HepG2 (cell line): ENCODE measurements at regions of chr4 and their contacts with region 1.

Region 1: GRCh38 chr4:48578132-48578968 is 88.3 kb downstream of the ZAR1 start:
- DNase-seq: peak; percentile 64
- ATAC-seq: peak; percentile 91
- H3K4me3 ChIP-seq: no peak overlapping the region
- H3K27ac ChIP-seq: no peak overlapping the region
- H3K4me1 ChIP-seq: no peaks in the 10 kb centered on the region
- H3K27me3 ChIP-seq: no peaks in the 10 kb centered on the region
- CTCF ChIP-seq: peak; percentile 85
- EP300 ChIP-seq: no peak
- POLR2A ChIP-seq: no peak
- RAD21 ChIP-seq: peak; percentile 61

Region 2: DNA sequence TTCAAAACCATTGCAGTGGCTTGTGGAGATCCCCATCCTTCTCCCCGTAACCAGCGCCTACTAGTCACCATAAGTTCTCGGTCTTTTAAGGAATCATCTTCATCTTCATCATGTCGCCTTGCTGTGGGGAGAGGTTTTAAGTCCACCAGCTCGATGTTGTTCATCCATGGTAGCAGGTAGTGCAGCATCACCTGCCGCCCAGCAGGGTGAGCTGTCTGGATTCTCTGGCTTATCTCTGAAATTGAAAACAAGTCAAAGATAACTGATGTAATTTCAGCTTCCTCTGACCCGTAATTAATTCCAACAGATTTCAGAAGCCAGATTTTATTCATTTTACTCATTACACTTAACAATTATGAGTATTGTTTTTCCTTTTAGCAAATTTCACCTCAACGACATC is 20.9 kb before region 1 on chr4:
- CTCF ChIA-PET with region 1: no interaction called
- POLR2A ChIA-PET with region 1: no interaction called
- in situ Hi-C with region 1: no loop called
- intact Hi-C with region 1: no loop called
- DNase-seq: no peak
- ATAC-seq: peak; percentile 73
- H3K4me3 ChIP-seq: no peak overlapping the region
- H3K27ac ChIP-seq: no peak overlapping the region
- H3K4me1 ChIP-seq: no peaks in the 10 kb centered on the region
- H3K27me3 ChIP-seq: no peaks in the 10 kb centered on the region
- CTCF ChIP-seq: peak; percentile 27
- EP300 ChIP-seq: no peak
- POLR2A ChIP-seq: no peak
- RAD21 ChIP-seq: no peak

Region 3: DNA sequence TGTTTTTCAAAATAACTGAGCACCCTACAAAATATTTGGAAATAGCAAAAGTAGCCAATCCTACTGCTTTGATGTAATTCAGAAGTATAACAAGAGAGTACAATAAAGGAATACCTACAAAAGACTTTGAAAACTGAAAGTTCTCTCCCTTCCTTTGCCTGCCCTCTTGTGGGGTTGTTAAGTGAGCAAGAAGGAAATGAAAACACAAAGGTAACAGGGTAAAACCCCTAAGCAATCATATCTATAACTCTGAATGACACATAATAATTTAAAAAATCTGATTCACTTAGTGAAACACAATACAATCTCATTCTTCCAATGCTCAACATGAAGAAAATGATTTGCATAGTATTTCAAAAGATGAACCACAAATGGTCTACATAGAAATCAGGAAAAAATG is 103.5 kb after region 1 on chr4:
- CTCF ChIA-PET with region 1: interaction called, 6 read pairs
- POLR2A ChIA-PET with region 1: no interaction called
- in situ Hi-C with region 1: no loop called
- intact Hi-C with region 1: loop called (anchors 1 kb)
- DNase-seq: peak; percentile 5
- ATAC-seq: no peak
- H3K4me3 ChIP-seq: no peak overlapping the region
- H3K27ac ChIP-seq: no peak overlapping the region
- H3K4me1 ChIP-seq: no peaks in the 10 kb centered on the region
- H3K27me3 ChIP-seq: no peaks in the 10 kb centered on the region
- CTCF ChIP-seq: peak; percentile 30; the same call in 1 of the 2 replicates
- EP300 ChIP-seq: no peak
- POLR2A ChIP-seq: no peak
- RAD21 ChIP-seq: no peak

Region 4: GRCh38 chr4:48944756-48945241 is 366.4 kb after region 1 on chr4:
- CTCF ChIA-PET with region 1: no interaction called
- POLR2A ChIA-PET with region 1: no interaction called
- in situ Hi-C with region 1: no loop called
- intact Hi-C with region 1: loop called (anchors 5 kb)
- DNase-seq: peak; percentile 3
- ATAC-seq: no peak
- H3K4me3 ChIP-seq: no peak overlapping the region
- H3K27ac ChIP-seq: no peak overlapping the region
- H3K4me1 ChIP-seq: no peaks in the 10 kb centered on the region
- H3K27me3 ChIP-seq: no peaks in the 10 kb centered on the region
- CTCF ChIP-seq: peak; percentile 42
- EP300 ChIP-seq: no peak
- POLR2A ChIP-seq: no peak
- RAD21 ChIP-seq: no peak

Region 5: DNA sequence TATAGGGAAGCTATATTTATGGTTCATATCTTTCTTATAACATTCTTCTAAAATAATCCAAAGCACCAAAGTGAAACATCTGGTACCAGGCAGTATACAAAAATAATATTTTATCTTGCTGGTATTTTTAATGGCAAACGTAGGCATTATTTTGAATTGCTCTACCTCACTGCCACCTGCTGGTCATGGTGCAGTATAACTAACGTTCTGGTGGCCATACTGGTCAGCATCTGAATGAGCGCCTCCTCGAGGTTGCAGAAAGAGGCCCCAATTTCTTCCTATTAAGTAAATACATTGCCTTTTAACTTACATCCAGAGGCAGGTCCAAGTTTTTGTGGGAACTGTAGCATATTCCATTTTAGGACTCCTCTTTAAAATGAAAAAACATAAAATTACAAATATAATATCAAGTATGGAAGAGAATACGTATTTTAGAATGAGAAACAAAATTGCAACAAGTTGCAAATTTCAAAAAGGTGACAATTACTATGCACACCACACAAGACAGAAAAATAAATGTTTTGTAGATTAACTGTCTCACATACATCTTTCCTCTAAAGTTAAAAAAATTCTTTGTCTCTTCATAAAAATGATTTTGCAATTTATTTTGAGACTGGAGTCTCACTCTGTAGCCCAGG is 384.8 kb after region 1 on chr4:
- CTCF ChIA-PET with region 1: interaction called, 95 read pairs
- POLR2A ChIA-PET with region 1: no interaction called
- in situ Hi-C with region 1: loop called (anchors 5 kb)
- intact Hi-C with region 1: loop called (anchors 1 kb)
- DNase-seq: peak; percentile 82
- ATAC-seq: peak; percentile 95
- H3K4me3 ChIP-seq: no peak overlapping the region
- H3K27ac ChIP-seq: no peak overlapping the region
- H3K4me1 ChIP-seq: no peaks in the 10 kb centered on the region
- H3K27me3 ChIP-seq: no peaks in the 10 kb centered on the region
- CTCF ChIP-seq: peak; percentile 89
- EP300 ChIP-seq: no peak
- POLR2A ChIP-seq: no peak
- RAD21 ChIP-seq: peak; percentile 81